CD4-positive, alpha-beta T cell (primary cell): ENCODE measurements at regions of chr12 and their contacts with region 1.

Region 1: GRCh38 chr12:122526683-122527477 is at the starts of genes KNTC1 and RSRC2:
- DNase-seq: peak; percentile 93 to 100 (median 96)
- ATAC-seq: peak; percentile 90
- H3K4me3 ChIP-seq: peak within 1 kb of the TSS; percentile 97
- H3K4me3 Mint-ChIP-seq: no peak within 1 kb of the TSS
- H3K27ac ChIP-seq: peak within 1 kb of the TSS; percentile 98 to 99
- H3K27ac Mint-ChIP-seq: no peak within 1 kb of the TSS
- H3K4me1 ChIP-seq: peaks cover 21% of the 10 kb centered on the region
- H3K4me1 Mint-ChIP-seq: peaks cover 36% of the 10 kb centered on the region
- H3K27me3 ChIP-seq: no peaks in the 10 kb centered on the region
- H3K27me3 Mint-ChIP-seq: no peaks in the 10 kb centered on the region
- CTCF ChIP-seq: no peak
- total RNA-seq, gene KNTC1: 23.3 to 23.8 TPM
- total RNA-seq, gene RSRC2: 339 to 341 TPM

Region 2: GRCh38 chr12:122538496-122538895 is 11.6 kb after region 1 on chr12:
- CTCF ChIA-PET with region 1: no interaction called
- POLR2A ChIA-PET with region 1: interaction called, 14 read pairs
- intact Hi-C with region 1: no loop called
- DNase-seq: no peak
- ATAC-seq: no peak
- H3K4me3 ChIP-seq: no peak overlapping the region
- H3K4me3 Mint-ChIP-seq: no peak overlapping the region
- H3K27ac ChIP-seq: no peak overlapping the region
- H3K27ac Mint-ChIP-seq: no peak overlapping the region
- H3K4me1 ChIP-seq: peaks cover 4% of the 10 kb centered on the region
- H3K4me1 Mint-ChIP-seq: no peaks in the 10 kb centered on the region
- H3K27me3 ChIP-seq: no peaks in the 10 kb centered on the region
- H3K27me3 Mint-ChIP-seq: no peaks in the 10 kb centered on the region
- CTCF ChIP-seq: no peak

Region 3: GRCh38 chr12:122799641-122800243 is 272.9 kb after region 1 on chr12:
- CTCF ChIA-PET with region 1: no interaction called
- POLR2A ChIA-PET with region 1: no interaction called
- intact Hi-C with region 1: no loop called
- DNase-seq: no peak
- ATAC-seq: no peak
- H3K4me3 ChIP-seq: no peak overlapping the region
- H3K4me3 Mint-ChIP-seq: no peak overlapping the region
- H3K27ac ChIP-seq: no peak overlapping the region
- H3K27ac Mint-ChIP-seq: no peak overlapping the region
- H3K4me1 ChIP-seq: no peaks in the 10 kb centered on the region
- H3K4me1 Mint-ChIP-seq: no peaks in the 10 kb centered on the region
- H3K27me3 ChIP-seq: no peaks in the 10 kb centered on the region
- H3K27me3 Mint-ChIP-seq: no peaks in the 10 kb centered on the region
- CTCF ChIP-seq: no peak

Region 4: DNA sequence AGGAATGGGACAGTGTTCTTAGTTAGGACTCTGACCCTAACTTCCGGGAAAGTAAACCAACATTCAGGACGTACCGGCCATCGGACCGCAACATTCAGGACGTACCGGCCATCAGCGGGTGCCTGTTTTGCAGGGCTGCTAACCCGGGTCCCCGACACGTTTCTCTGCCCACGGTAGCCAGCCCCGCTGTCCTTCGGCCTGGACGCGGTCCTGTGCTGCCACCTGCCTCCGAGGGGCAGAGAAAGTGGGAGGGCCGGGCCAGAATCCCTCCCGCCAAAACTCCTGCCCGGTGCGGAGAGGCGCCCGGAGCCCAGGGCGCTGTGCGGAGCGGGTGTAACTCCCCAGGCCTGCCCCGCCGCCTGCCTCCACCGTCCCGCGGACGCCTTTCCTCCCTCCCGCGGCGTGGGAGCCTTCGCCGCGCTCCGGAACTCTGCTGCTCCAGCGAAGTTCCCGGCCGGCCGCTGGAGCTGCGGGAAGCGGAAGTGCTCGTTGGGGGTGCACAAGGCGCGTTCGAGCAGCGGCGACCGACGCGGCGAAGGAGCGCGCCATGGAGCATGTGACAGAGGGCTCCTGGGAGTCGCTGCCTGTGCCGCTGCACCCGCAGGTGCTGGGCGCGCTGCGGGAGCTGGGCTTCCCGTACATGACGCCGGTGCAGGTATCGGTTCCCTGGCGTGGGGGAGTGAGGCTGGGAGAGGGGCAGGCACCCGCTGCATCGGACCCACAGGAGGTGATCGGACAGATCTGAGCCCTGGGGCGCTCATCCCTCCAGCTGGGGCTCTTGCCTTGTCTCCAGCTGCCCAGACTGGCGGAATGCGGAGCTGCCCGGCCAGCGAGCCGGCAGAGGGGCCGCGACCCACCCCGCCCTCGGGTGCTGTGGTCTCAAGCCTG is 1075.0 kb after region 1 on chr12 and contains the start of gene DDX55:
- CTCF ChIA-PET with region 1: no interaction called
- POLR2A ChIA-PET with region 1: interaction called, 3 read pairs
- intact Hi-C with region 1: loop called in 1 of 2 experiments (anchors 5 kb)
- DNase-seq: peak; percentile 78 to 95 (median 84)
- ATAC-seq: peak; percentile 93
- H3K4me3 ChIP-seq: peak within 1 kb of the TSS; percentile 98
- H3K4me3 Mint-ChIP-seq: peak within 1 kb of the TSS; percentile 98
- H3K27ac ChIP-seq: peak within 1 kb of the TSS; percentile 85 to 89
- H3K27ac Mint-ChIP-seq: peak within 1 kb of the TSS; percentile 76
- H3K4me1 ChIP-seq: peaks cover 27% of the 10 kb centered on the region
- H3K4me1 Mint-ChIP-seq: peaks cover 33% of the 10 kb centered on the region
- H3K27me3 ChIP-seq: no peaks in the 10 kb centered on the region
- H3K27me3 Mint-ChIP-seq: no peaks in the 10 kb centered on the region
- CTCF ChIP-seq: peak; percentile 54
- total RNA-seq, gene DDX55: 33.3 to 37.1 TPM